ENCODE measurements at regions of chr1 and their contacts with region 1.

Region 1: GRCh38 chr1:162035241-162035640 is 11.6 kb upstream of the OLFML2B start:
- DNase-seq: no peak
- H3K4me3 ChIP-seq: no peak overlapping the region
- H3K27ac ChIP-seq: no peak overlapping the region
- H3K27me3 ChIP-seq: peaks cover 26% of the 10 kb centered on the region
- CTCF ChIP-seq: no peak

Region 2: GRCh38 chr1:161792740-161793139 is 242.5 kb before region 1 on chr1:
- CTCF ChIA-PET with region 1: interaction called, 771 read pairs
- POLR2A ChIA-PET with region 1: interaction called, 11 read pairs
- DNase-seq: peak; percentile 60
- H3K4me3 ChIP-seq: no peak overlapping the region
- H3K27ac ChIP-seq: no peak overlapping the region
- H3K27me3 ChIP-seq: no peaks in the 10 kb centered on the region
- CTCF ChIP-seq: peak; percentile 53

Region 3: DNA sequence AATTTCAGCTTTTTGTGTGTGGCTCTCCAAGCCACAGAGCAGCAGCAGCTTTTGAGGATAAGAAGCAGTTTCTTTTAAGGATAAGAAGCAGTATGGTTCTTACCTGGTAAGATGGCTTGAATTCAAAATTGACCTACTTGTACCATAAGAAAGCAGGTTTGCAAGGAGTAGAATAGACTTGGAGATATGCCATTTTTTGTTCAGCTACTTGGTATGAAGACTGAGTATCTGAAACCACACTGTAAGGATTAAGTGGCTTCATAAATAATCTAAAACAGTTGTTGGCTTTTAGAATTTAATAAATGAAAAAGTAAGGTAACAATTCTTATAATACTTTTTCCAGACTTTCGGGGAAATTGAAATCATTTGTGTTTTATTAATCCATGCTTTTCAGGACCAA is 194.9 kb before region 1 on chr1:
- CTCF ChIA-PET with region 1: interaction called, 13 read pairs
- POLR2A ChIA-PET with region 1: no interaction called
- DNase-seq: no peak
- H3K4me3 ChIP-seq: no peak overlapping the region
- H3K27ac ChIP-seq: no peak overlapping the region
- H3K27me3 ChIP-seq: no peaks in the 10 kb centered on the region
- CTCF ChIP-seq: no peak

Region 4: DNA sequence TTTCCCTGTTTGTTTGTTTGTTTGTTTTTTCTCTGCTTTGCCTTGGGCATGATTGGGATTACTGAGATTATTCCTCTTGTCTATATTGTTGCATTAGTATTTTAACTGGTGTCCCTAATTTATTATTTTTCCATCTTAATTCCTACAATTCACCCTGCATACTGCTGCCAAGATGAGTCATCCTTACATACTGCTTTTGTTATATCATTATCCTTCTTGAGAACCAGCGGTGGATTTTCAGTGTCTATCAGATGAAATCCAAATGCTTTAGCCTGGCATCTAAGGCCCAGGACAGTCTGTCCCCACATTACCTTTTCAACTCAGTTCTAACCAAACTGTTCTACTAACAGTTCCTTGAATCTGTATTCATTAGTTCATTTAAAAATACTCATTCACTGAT is 113.3 kb before region 1 on chr1:
- CTCF ChIA-PET with region 1: interaction called, 10 read pairs
- POLR2A ChIA-PET with region 1: no interaction called
- DNase-seq: no peak
- H3K4me3 ChIP-seq: no peak overlapping the region
- H3K27ac ChIP-seq: no peak overlapping the region
- H3K27me3 ChIP-seq: no peaks in the 10 kb centered on the region
- CTCF ChIP-seq: no peak

Region 5: GRCh38 chr1:162023547-162024501 is 11.4 kb before region 1 on chr1 and contains the start of gene OLFML2B:
- CTCF ChIA-PET with region 1: interaction called, 67 read pairs
- POLR2A ChIA-PET with region 1: interaction called, 4 read pairs
- DNase-seq: peak; percentile 37
- H3K4me3 ChIP-seq: peak within 1 kb of the TSS; percentile 82
- H3K27ac ChIP-seq: peak within 1 kb of the TSS; percentile 31
- H3K27me3 ChIP-seq: peaks cover 2% of the 10 kb centered on the region
- CTCF ChIP-seq: peak; percentile 54
- polyA plus RNA-seq, gene OLFML2B: 0.68 and 1.2 TPM in 2 replicates

Region 6: DNA sequence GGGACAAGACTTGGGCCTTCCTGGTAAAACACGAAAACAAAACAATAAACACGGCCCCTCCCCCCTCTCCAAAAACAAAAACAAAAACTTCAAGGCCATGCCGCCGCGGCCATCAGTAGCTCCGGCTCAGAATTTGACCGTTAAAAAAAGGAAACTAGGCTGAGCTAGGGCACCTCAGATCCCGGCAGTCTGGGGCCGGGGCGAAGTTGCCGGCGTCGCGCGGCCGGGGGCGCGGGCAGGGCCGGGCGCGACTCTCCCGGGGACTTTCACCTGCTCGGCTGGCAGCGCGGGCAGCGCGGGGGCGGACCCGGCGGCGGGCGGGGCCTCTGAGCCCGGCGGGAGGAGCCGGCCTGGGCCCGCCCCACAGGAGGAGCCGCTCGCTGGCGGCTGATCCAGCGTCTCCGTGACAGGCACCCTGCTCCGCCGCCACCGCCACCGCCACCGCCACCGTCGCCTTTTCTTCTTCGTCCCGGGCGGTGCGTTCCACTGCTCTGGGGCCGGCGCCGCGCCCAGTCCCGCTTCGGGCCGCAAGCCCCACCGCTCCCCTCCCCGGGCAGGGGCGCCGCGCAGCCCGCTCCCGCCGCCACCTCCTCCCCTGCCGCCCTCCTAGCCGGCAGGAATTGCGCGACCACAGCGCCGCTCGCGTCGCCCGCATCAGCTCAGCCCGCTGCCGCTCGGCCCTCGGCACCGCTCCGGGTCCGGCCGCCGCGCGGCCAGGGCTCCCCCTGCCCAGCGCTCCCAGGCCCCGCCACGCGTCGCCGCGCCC is 34.3 kb after region 1 on chr1 and contains the start of gene NOS1AP:
- CTCF ChIA-PET with region 1: no interaction called
- POLR2A ChIA-PET with region 1: no interaction called
- DNase-seq: no peak
- H3K4me3 ChIP-seq: peak within 1 kb of the TSS; percentile 59
- H3K27ac ChIP-seq: no peak within 1 kb of the TSS
- H3K27me3 ChIP-seq: peaks cover 40% of the 10 kb centered on the region
- CTCF ChIP-seq: no peak
- polyA plus RNA-seq, gene NOS1AP: 0.04 and 0.12 TPM in 2 replicates

Measured in AG04450 (cell line).